ENCODE measurements at regions of chr13 and their contacts with region 1.

Region 1: GRCh38 chr13:24223341-24224232 is 63.1 kb downstream of the SPATA13 start:
- DNase-seq: no peak
- H3K4me3 ChIP-seq: no peak overlapping the region
- H3K27ac ChIP-seq: no peak overlapping the region
- H3K4me1 ChIP-seq: no peaks in the 10 kb centered on the region
- H3K27me3 ChIP-seq: no peaks in the 10 kb centered on the region
- CTCF ChIP-seq: no peak
- POLR2A ChIP-seq: no peak

Region 2: GRCh38 chr13:24053519-24054251 is 169.9 kb before region 1 on chr13:
- intact Hi-C with region 1: loop called (anchors 2 kb)
- DNase-seq: peak; percentile 41 to 66
- H3K4me3 ChIP-seq: no peak overlapping the region
- H3K27ac ChIP-seq: peak overlapping the region; percentile 4 to 48
- H3K4me1 ChIP-seq: peaks cover 4 to 6% of the 10 kb centered on the region in 2 donors
- H3K27me3 ChIP-seq: no peaks in the 10 kb centered on the region
- CTCF ChIP-seq: peak in 2 of 3 donors; percentile 75 to 82
- POLR2A ChIP-seq: no peak

Region 3: GRCh38 chr13:24161010-24161775 is 62.4 kb before region 1 on chr13:
- intact Hi-C with region 1: no loop called
- DNase-seq: peak in 1 of 2 donors; percentile 60
- H3K4me3 ChIP-seq: peak overlapping the region; percentile 80 to 84 (median 84)
- H3K27ac ChIP-seq: peak overlapping the region; percentile 88 to 93
- H3K4me1 ChIP-seq: peaks cover 0 to 7% of the 10 kb centered on the region in 2 donors
- H3K27me3 ChIP-seq: no peaks in the 10 kb centered on the region
- CTCF ChIP-seq: no peak
- POLR2A ChIP-seq: no peak

Region 4: GRCh38 chr13:25391932-25392331 is 1168.3 kb after region 1 on chr13:
- intact Hi-C with region 1: no loop called
- DNase-seq: no peak
- H3K4me3 ChIP-seq: no peak overlapping the region
- H3K27ac ChIP-seq: no peak overlapping the region
- H3K4me1 ChIP-seq: no peaks in the 10 kb centered on the region
- H3K27me3 ChIP-seq: no peaks in the 10 kb centered on the region
- CTCF ChIP-seq: no peak
- POLR2A ChIP-seq: no peak

Measured in breast epithelium (tissue), 4 donors.